ENCODE measurements at regions of chr5 and their contacts with region 1.

Region 1: GRCh38 chr5:107673368-107674136 is 2.8 kb upstream of the EFNA5 start:
- DNase-seq: peak; percentile 87
- H3K4me3 ChIP-seq: peak overlapping the region; percentile 40 to 78 (median 45)
- H3K27ac ChIP-seq: peak overlapping the region; percentile 63
- H3K4me1 ChIP-seq: peaks cover 2% of the 10 kb centered on the region
- H3K27me3 ChIP-seq: no peaks in the 10 kb centered on the region
- CTCF ChIP-seq: peak; percentile 96 to 97
- POLR2A ChIP-seq: no peak

Region 2: GRCh38 chr5:106397700-106398099 is 1275.9 kb before region 1 on chr5:
- CTCF ChIA-PET with region 1: no interaction called
- POLR2A ChIA-PET with region 1: no interaction called
- dilution Hi-C with region 1: no loop called
- intact Hi-C with region 1: loop called (anchors 2 kb)
- DNase-seq: peak; percentile 92
- H3K4me3 ChIP-seq: no peak overlapping the region
- H3K27ac ChIP-seq: peak overlapping the region; percentile 70
- H3K4me1 ChIP-seq: peaks cover 16% of the 10 kb centered on the region
- H3K27me3 ChIP-seq: no peaks in the 10 kb centered on the region
- CTCF ChIP-seq: no peak
- POLR2A ChIP-seq: no peak

Region 3: DNA sequence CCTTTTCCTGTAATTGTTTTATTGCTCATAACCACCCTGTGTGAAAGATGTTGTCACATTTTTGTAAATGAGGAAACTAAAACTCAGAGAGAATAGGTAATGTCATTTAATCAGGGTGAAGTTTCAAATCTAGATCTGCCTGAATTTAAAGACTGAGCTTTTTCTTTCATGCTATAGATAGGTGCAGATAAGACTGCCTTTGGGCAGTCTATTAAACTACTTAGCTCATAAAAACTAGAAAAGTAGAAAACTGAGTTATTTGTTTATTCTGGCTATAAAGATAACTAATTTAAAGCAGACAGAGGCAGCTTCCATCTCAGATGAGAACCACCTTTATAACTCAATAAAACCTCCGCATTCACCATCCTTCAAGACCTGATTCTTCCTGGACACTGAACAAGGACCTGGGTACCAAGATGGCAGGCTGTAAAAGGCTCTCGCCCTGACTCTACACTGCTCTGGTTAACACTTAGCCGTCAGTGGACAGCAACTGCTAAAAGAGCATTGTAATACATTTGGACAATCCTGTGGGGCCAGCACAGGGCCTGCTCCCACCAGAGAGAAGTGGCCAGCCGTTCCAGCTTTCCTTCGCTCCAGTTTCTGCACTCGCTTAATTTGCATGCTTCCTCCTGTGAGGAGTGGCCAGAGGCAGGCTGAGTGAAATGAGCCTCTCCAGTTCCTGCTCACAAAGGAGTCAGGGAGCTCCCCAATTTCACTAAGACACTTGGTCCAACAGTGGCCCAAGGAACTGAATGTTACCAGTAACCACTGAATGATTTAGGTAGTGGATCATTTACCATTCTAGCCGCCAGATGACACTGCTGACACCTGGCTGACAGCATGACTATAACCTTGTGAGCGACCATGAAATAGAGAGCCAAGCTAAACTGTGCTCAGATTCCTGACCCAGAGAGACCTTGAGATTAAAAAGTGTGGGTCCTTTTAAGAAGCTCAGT is 569.2 kb before region 1 on chr5:
- CTCF ChIA-PET with region 1: no interaction called
- POLR2A ChIA-PET with region 1: no interaction called
- dilution Hi-C with region 1: no loop called
- intact Hi-C with region 1: loop called (anchors 10 kb)
- DNase-seq: no peak
- H3K4me3 ChIP-seq: no peak overlapping the region
- H3K27ac ChIP-seq: no peak overlapping the region
- H3K4me1 ChIP-seq: no peaks in the 10 kb centered on the region
- H3K27me3 ChIP-seq: no peaks in the 10 kb centered on the region
- CTCF ChIP-seq: no peak
- POLR2A ChIP-seq: no peak

Region 4: GRCh38 chr5:107322936-107323335 is 350.6 kb before region 1 on chr5:
- CTCF ChIA-PET with region 1: no interaction called
- POLR2A ChIA-PET with region 1: no interaction called
- dilution Hi-C with region 1: no loop called
- intact Hi-C with region 1: loop called (anchors 1 kb)
- DNase-seq: peak; percentile 57
- H3K4me3 ChIP-seq: no peak overlapping the region
- H3K27ac ChIP-seq: no peak overlapping the region
- H3K4me1 ChIP-seq: peaks cover 24% of the 10 kb centered on the region
- H3K27me3 ChIP-seq: no peaks in the 10 kb centered on the region
- CTCF ChIP-seq: no peak
- POLR2A ChIP-seq: no peak

Region 5: GRCh38 chr5:107469485-107470294 is 203.9 kb before region 1 on chr5:
- CTCF ChIA-PET with region 1: interaction called, 3 read pairs
- POLR2A ChIA-PET with region 1: interaction called, 3 read pairs
- dilution Hi-C with region 1: no loop called
- intact Hi-C with region 1: loop called (anchors 1 kb)
- DNase-seq: peak; percentile 96
- H3K4me3 ChIP-seq: peak overlapping the region in 1 of 3 experiments; percentile 16
- H3K27ac ChIP-seq: peak overlapping the region; percentile 97
- H3K4me1 ChIP-seq: peaks cover 61% of the 10 kb centered on the region
- H3K27me3 ChIP-seq: no peaks in the 10 kb centered on the region
- CTCF ChIP-seq: no peak
- POLR2A ChIP-seq: no peak

Region 6: DNA sequence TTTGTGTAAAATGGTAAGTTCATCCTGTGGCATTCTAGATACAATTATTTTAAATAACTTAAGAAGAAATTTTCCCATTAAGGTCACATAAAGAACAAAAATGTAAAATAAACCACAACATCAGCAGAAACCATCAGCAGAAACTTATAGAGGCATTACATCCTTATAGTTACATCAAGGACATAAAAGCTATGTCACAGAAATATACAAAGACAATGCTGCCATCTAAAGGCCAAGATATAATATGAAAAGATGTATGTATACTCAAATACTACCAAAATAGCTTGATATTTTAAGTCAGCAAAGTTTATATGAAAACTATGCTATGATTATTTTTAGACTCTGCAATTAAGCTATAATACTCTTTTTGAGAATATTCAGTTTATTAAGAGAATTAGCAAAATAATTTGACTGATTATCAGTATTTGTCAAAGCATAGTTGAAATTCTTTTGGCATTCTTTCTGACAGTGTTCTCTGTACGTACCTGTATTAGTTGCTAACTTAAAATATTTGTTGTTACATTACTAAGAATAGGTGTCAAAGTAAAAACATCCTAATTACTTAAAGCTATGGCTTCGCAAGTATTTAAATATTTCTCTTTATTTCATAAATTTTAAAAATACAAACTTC is 672.1 kb after region 1 on chr5:
- CTCF ChIA-PET with region 1: interaction called, 25 read pairs
- POLR2A ChIA-PET with region 1: no interaction called
- dilution Hi-C with region 1: no loop called
- intact Hi-C with region 1: loop called (anchors 2 kb)
- DNase-seq: peak; percentile 70
- H3K4me3 ChIP-seq: no peak overlapping the region
- H3K27ac ChIP-seq: no peak overlapping the region
- H3K4me1 ChIP-seq: no peaks in the 10 kb centered on the region
- H3K27me3 ChIP-seq: no peaks in the 10 kb centered on the region
- CTCF ChIP-seq: peak; percentile 2 to 10
- POLR2A ChIP-seq: no peak

Measured in endothelial cell of umbilical vein (primary cell).